ENCODE measurements at regions of chr1 and their contacts with region 1.

Region 1: DNA sequence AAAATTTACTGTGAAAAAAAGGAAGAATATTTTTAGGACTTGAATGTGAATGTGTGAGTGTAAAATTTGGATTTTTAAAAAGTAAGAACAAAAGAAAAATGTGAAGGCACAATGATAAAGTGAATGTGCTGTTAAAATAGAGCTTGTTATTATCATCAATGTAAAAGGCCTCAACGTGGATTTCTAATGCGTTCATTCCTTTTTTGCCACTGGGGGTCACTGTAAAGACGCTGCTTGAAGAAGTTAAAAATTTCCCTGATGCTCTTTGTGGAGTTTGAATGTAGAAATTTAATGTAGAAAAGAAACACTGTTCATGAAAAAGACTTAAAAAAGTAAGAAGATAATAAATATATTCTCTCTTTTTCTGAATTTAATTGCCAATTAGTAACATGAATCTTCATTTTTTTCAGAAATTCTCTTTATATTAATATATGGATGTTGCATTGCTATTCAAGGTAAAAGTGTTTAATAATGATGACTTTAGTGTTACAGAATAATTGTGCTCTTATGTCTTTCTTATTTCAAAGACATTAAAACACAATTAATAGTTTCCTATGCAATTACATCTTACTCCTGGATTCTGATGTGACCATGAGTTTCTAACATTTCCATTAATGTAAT is 161.5 kb downstream of the DNM3 start:
- DNase-seq: no peak
- ATAC-seq: no peak
- H3K4me3 ChIP-seq: no peak overlapping the region
- H3K27ac ChIP-seq: no peak overlapping the region
- H3K4me1 ChIP-seq: no peaks in the 10 kb centered on the region
- H3K27me3 ChIP-seq: no peaks in the 10 kb centered on the region

Region 2: DNA sequence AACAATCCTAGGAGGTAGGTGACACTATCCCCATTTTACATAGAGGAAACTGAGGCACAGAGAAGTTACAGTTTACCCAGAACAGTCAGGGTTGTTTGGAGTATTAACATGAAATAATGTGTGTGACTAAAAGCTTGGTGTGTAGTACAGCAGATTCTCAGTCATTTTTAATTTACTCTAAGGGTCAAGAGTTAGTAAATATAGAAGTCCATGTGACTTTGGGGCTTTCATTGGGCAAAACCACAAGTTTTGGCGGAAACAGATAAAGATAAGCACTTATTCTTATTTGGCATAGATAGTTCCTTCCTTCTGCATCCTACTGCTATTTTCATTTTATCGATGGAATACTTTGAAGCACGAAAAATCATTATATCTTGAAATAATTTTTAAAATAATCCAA is 33.0 kb before region 1 on chr1:
- intact Hi-C with region 1: no loop called
- DNase-seq: no peak
- ATAC-seq: no peak
- H3K4me3 ChIP-seq: no peak overlapping the region
- H3K27ac ChIP-seq: no peak overlapping the region
- H3K4me1 ChIP-seq: no peaks in the 10 kb centered on the region
- H3K27me3 ChIP-seq: no peaks in the 10 kb centered on the region

Region 3: DNA sequence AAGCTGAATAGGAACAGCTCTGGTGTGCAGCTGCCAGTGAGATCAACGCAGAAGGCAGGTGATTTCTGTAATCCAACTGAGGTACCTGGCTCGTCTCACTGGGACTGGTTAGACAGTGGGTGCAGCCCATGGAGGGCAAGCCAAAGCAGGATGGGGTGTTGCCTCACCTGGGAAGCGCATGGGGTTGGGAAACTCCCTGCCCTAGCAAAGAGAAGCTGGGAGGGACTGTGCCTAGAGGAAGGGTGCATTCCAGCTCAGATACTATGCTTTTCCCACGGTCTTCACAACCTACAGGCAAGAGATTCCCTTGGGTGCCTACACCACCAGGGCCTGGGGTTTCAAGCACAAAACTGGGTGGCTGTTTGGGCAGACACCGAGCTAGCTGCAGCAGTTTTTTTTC is 21.7 kb after region 1 on chr1:
- intact Hi-C with region 1: no loop called
- DNase-seq: no peak
- ATAC-seq: no peak
- H3K4me3 ChIP-seq: no peak overlapping the region
- H3K27ac ChIP-seq: no peak overlapping the region
- H3K4me1 ChIP-seq: no peaks in the 10 kb centered on the region
- H3K27me3 ChIP-seq: no peaks in the 10 kb centered on the region

Region 4: GRCh38 chr1:172429331-172430127 is 426.7 kb after region 1 on chr1:
- intact Hi-C with region 1: loop called (anchors 5 kb)
- DNase-seq: no peak
- ATAC-seq: no peak
- H3K4me3 ChIP-seq: no peak overlapping the region
- H3K27ac ChIP-seq: no peak overlapping the region
- H3K4me1 ChIP-seq: peaks cover 0 to 2% of the 10 kb centered on the region in 2 donors
- H3K27me3 ChIP-seq: no peaks in the 10 kb centered on the region

Region 5: GRCh38 chr1:172443626-172444453 is 441.0 kb after region 1 on chr1 and contains the start of gene PIGC:
- intact Hi-C with region 1: loop called in 1 of 2 experiments (anchors 5 kb)
- DNase-seq: peak; percentile 95 to 97
- ATAC-seq: peak; percentile 98
- H3K4me3 ChIP-seq: peak within 1 kb of the TSS; percentile 60 to 92
- H3K27ac ChIP-seq: no peak within 1 kb of the TSS
- H3K4me1 ChIP-seq: no peaks in the 10 kb centered on the region
- H3K27me3 ChIP-seq: no peaks in the 10 kb centered on the region
- total RNA-seq, gene PIGC: 18.0 to 22.9 TPM